CD4-positive, alpha-beta memory T cell (primary cell): ENCODE measurements at regions of chr15 and their contacts with region 1.

Region 1: GRCh38 chr15:88904624-88905327 is 8.4 kb downstream of the MFGE8 start:
- DNase-seq: peak; percentile 94 to 99 (median 97)
- H3K4me3 ChIP-seq: peak overlapping the region in 1 of 2 donors; percentile 13
- H3K4me3 Mint-ChIP-seq: peak overlapping the region; percentile 25 to 81 (median 58)
- H3K27ac ChIP-seq: peak overlapping the region; percentile 77
- H3K27ac Mint-ChIP-seq: peak overlapping the region; percentile 94 to 98 (median 96)
- H3K4me1 ChIP-seq: peaks cover 38% of the 10 kb centered on the region
- H3K4me1 Mint-ChIP-seq: peaks cover 27 to 65% (median 47%) of the 10 kb centered on the region in 4 donors
- H3K27me3 ChIP-seq: no peaks in the 10 kb centered on the region
- H3K27me3 Mint-ChIP-seq: no peaks in the 10 kb centered on the region

Region 2: GRCh38 chr15:88620995-88621772 is 283.6 kb before region 1 on chr15 and contains the start of gene AEN:
- CTCF ChIA-PET with region 1: interaction called, 12 read pairs
- POLR2A ChIA-PET with region 1: interaction called, 5 read pairs
- intact Hi-C with region 1: loop called (anchors 2 kb)
- DNase-seq: peak; percentile 94 to 97 (median 95)
- H3K4me3 ChIP-seq: peak within 1 kb of the TSS; percentile 79 to 92
- H3K4me3 Mint-ChIP-seq: peak within 1 kb of the TSS; percentile 88 to 96 (median 92)
- H3K27ac ChIP-seq: peak within 1 kb of the TSS; percentile 82
- H3K27ac Mint-ChIP-seq: peak within 1 kb of the TSS; percentile 89 to 97 (median 96)
- H3K4me1 ChIP-seq: peaks cover 49% of the 10 kb centered on the region
- H3K4me1 Mint-ChIP-seq: peaks cover 30 to 54% (median 42%) of the 10 kb centered on the region in 4 donors
- H3K27me3 ChIP-seq: no peaks in the 10 kb centered on the region
- H3K27me3 Mint-ChIP-seq: peaks cover 0 to 2% of the 10 kb centered on the region in 2 donors
- total RNA-seq, gene AEN: 54.5 to 56.8 TPM

Region 3: DNA sequence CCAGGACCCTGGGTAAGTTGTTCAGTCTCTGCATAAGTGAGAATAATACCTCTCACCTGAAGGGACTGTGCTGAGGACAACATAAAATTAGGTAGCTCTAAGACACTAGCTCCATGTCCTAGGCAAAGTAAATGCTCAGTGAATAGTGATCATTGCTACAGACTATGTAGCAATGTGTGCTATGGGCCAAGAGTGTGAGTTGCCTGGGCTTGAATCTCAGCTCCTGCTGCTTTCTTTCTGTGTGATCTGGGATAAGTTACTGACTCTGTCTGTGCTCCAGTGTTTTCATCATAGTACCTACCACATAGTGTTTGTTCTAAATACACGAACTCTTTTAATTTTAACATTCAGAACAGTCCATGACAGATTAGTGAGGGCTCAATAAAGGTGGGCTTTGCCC is 89.5 kb after region 1 on chr15:
- CTCF ChIA-PET with region 1: interaction called, 10 read pairs
- POLR2A ChIA-PET with region 1: no interaction called
- intact Hi-C with region 1: no loop called
- DNase-seq: no peak
- H3K4me3 ChIP-seq: no peak overlapping the region
- H3K4me3 Mint-ChIP-seq: no peak overlapping the region
- H3K27ac ChIP-seq: no peak overlapping the region
- H3K27ac Mint-ChIP-seq: no peak overlapping the region
- H3K4me1 ChIP-seq: no peaks in the 10 kb centered on the region
- H3K4me1 Mint-ChIP-seq: no peaks in the 10 kb centered on the region
- H3K27me3 ChIP-seq: no peaks in the 10 kb centered on the region
- H3K27me3 Mint-ChIP-seq: peaks cover 8 to 9% of the 10 kb centered on the region in 2 donors

Region 4: DNA sequence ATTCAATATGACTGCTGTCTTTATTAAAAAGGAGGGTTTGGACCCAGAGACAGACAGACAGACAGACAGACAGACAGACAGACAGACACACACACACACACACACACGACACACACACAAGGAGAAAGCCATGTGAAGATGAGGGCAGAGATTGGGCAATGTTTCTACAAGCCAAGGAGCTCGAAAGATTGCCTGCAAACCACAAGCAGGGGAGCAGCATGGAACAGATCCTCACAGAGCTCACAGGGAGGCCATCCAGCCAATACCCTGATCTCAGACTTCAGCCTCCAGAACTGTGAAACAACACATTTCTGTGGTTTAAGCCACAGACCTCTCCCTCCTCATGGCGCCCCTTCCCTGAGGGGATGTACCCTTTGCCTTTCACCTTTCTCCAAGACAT is 147.7 kb after region 1 on chr15:
- CTCF ChIA-PET with region 1: interaction called, 50 read pairs
- POLR2A ChIA-PET with region 1: interaction called, 4 read pairs
- intact Hi-C with region 1: no loop called
- DNase-seq: no peak
- H3K4me3 ChIP-seq: no peak overlapping the region
- H3K4me3 Mint-ChIP-seq: no peak overlapping the region
- H3K27ac ChIP-seq: no peak overlapping the region
- H3K27ac Mint-ChIP-seq: peak overlapping the region in 5 of 7 donors; percentile 26 to 73 (median 46)
- H3K4me1 ChIP-seq: peaks cover 10% of the 10 kb centered on the region
- H3K4me1 Mint-ChIP-seq: peaks cover 16 to 38% (median 31%) of the 10 kb centered on the region in 4 donors
- H3K27me3 ChIP-seq: no peaks in the 10 kb centered on the region
- H3K27me3 Mint-ChIP-seq: no peaks in the 10 kb centered on the region

Region 5: GRCh38 chr15:89129123-89129815 is 224.5 kb after region 1 on chr15:
- CTCF ChIA-PET with region 1: interaction called, 33 read pairs
- POLR2A ChIA-PET with region 1: interaction called, 9 read pairs
- intact Hi-C with region 1: loop called (anchors 2 kb)
- DNase-seq: peak; percentile 44 to 52 (median 48)
- H3K4me3 ChIP-seq: no peak overlapping the region
- H3K4me3 Mint-ChIP-seq: no peak overlapping the region
- H3K27ac ChIP-seq: no peak overlapping the region
- H3K27ac Mint-ChIP-seq: no peak overlapping the region
- H3K4me1 ChIP-seq: peaks cover 24% of the 10 kb centered on the region
- H3K4me1 Mint-ChIP-seq: peaks cover 13 to 33% (median 18%) of the 10 kb centered on the region in 4 donors
- H3K27me3 ChIP-seq: no peaks in the 10 kb centered on the region
- H3K27me3 Mint-ChIP-seq: no peaks in the 10 kb centered on the region

Region 6: DNA sequence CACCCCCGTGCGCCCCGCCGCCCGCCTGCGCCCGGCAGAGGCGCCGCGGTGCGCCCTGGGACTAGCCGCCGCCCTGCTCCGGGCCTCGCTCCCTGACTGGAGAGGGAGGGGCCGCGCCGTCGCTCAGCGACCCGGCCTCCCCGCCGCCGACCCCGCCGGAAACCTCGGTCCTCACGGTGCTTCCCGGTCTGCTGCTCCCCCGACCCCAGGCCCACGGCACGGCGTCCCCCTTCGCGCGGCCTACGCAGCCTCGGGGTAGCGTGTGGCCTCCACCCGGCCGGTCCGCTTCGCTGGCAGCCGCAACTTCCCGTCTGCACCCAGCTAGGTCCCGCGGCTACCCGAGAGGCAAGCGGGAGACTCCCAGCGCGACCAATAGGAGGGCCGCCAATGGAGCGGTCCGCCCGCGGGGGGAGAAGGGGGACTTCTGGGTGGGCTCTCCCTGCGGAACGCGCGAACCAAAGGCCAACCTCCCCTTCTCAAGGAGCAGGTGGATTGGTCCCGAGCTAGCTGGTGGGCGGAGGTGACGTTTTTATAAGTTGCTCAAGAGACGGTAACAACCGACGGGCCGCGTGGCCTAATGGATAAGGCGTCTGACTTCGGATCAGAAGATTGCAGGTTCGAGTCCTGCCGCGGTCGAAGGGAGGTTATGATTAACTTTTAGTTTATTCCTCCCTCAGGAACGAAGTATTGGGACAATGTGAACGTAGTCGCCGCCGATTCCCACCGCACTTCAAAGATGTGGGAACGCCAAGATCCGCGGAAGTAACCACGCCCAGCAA is 429.9 kb after region 1 on chr15 and contains the start of gene POLG:
- CTCF ChIA-PET with region 1: no interaction called
- POLR2A ChIA-PET with region 1: no interaction called
- intact Hi-C with region 1: loop called (anchors 5 kb)
- DNase-seq: peak; percentile 99 to 100 (median 99)
- H3K4me3 ChIP-seq: peak within 1 kb of the TSS; percentile 81 to 92
- H3K4me3 Mint-ChIP-seq: peak within 1 kb of the TSS; percentile 90 to 100 (median 94)
- H3K27ac ChIP-seq: peak within 1 kb of the TSS; percentile 69
- H3K27ac Mint-ChIP-seq: peak within 1 kb of the TSS; percentile 88 to 100 (median 98)
- H3K4me1 ChIP-seq: peaks cover 54% of the 10 kb centered on the region
- H3K4me1 Mint-ChIP-seq: peaks cover 37 to 59% (median 47%) of the 10 kb centered on the region in 4 donors
- H3K27me3 ChIP-seq: no peaks in the 10 kb centered on the region
- H3K27me3 Mint-ChIP-seq: peaks cover 2 to 7% of the 10 kb centered on the region in 2 donors
- total RNA-seq, gene POLG: 148 to 151 TPM